ENCODE measurements at regions of chr2 and their contacts with region 1.

Region 1: GRCh38 chr2:208025037-208025813 is at the start of gene PLEKHM3:
- DNase-seq: peak; percentile 83
- ATAC-seq: peak; percentile 92
- H3K4me3 ChIP-seq: peak within 1 kb of the TSS; percentile 71 to 95 (median 92)
- H3K4me3 Mint-ChIP-seq: peak within 1 kb of the TSS; percentile 95
- H3K27ac ChIP-seq: peak within 1 kb of the TSS; percentile 57 to 84
- H3K27ac Mint-ChIP-seq: peak within 1 kb of the TSS; percentile 96
- H3K4me1 ChIP-seq: peaks cover 7 to 8% of the 10 kb centered on the region in 2 donors
- H3K4me1 Mint-ChIP-seq: peaks cover 25% of the 10 kb centered on the region
- H3K27me3 ChIP-seq: no peaks in the 10 kb centered on the region
- H3K27me3 Mint-ChIP-seq: no peaks in the 10 kb centered on the region
- CTCF ChIP-seq: no peak
- total RNA-seq, gene PLEKHM3: 17.7 and 19.5 TPM in 2 replicates

Region 2: DNA sequence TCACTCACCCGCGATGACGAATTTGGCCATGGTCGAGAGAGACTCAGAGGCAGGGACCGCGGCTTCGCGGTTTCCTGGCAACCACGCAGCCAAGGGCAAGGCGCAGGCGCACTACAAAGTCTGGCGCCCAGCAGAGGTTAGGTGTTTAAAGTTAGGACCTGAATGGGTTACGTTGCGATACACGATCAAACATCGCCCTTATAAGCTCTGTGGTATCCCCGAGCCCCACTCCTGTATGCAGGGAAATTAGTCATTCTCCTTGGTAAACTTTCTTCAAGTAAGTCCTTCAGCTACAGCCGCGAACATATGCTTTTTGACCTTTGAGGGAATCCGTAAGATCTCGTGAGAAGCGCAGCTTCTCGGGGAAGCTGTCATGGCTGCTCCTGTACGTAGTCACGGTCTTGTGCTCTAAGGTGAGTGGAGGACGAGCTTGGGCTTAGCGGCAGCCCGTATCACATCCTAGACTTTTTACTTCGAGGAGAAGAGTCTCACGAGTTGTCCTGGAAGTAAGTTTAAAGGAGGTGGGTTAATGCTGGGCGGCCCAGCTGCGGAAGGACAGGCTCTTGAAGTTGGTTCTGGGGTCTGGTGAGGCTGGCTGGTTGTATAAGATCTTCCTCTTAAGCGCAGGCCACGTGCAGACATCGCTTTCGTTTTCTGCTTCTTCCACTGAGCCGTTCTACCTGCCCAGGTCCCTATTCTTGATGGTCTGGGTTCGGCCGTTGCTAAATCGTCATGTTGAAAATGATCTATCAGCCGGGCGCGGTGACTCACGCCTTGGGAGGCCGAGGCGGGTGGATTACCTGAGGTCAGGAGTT is 1259.8 kb before region 1 on chr2 and contains the starts of genes FASTKD2 and MDH1B:
- CTCF ChIA-PET with region 1: no interaction called
- POLR2A ChIA-PET with region 1: no interaction called
- intact Hi-C with region 1: loop called (anchors 2 kb)
- DNase-seq: peak; percentile 96
- ATAC-seq: peak; percentile 85
- H3K4me3 ChIP-seq: peak within 1 kb of the TSS; percentile 63 to 96 (median 87)
- H3K4me3 Mint-ChIP-seq: peak within 1 kb of the TSS; percentile 99
- H3K27ac ChIP-seq: peak within 1 kb of the TSS; percentile 77 to 92
- H3K27ac Mint-ChIP-seq: peak within 1 kb of the TSS; percentile 97
- H3K4me1 ChIP-seq: peaks cover 14% of the 10 kb centered on the region in 2 donors
- H3K4me1 Mint-ChIP-seq: peaks cover 32% of the 10 kb centered on the region
- H3K27me3 ChIP-seq: peaks cover 0 to 17% (median 6%) of the 10 kb centered on the region in 4 experiments
- H3K27me3 Mint-ChIP-seq: no peaks in the 10 kb centered on the region
- CTCF ChIP-seq: no peak
- total RNA-seq, gene FASTKD2: 20.6 and 24.5 TPM in 2 replicates
- total RNA-seq, gene MDH1B: 0.34 TPM in 1 of 2 replicates, not detected in the other

Region 3: GRCh38 chr2:207317378-207317984 is 707.7 kb before region 1 on chr2:
- CTCF ChIA-PET with region 1: no interaction called
- POLR2A ChIA-PET with region 1: no interaction called
- intact Hi-C with region 1: no loop called
- DNase-seq: no peak
- ATAC-seq: no peak
- H3K4me3 ChIP-seq: no peak overlapping the region
- H3K4me3 Mint-ChIP-seq: no peak overlapping the region
- H3K27ac ChIP-seq: no peak overlapping the region
- H3K27ac Mint-ChIP-seq: no peak overlapping the region
- H3K4me1 ChIP-seq: peaks cover 0 to 2% of the 10 kb centered on the region in 2 donors
- H3K4me1 Mint-ChIP-seq: peaks cover 7% of the 10 kb centered on the region
- H3K27me3 ChIP-seq: no peaks in the 10 kb centered on the region
- H3K27me3 Mint-ChIP-seq: peaks cover 4% of the 10 kb centered on the region
- CTCF ChIP-seq: no peak

Region 4: GRCh38 chr2:207769597-207770486 is 255.4 kb before region 1 on chr2 and contains the start of gene FZD5:
- CTCF ChIA-PET with region 1: no interaction called
- POLR2A ChIA-PET with region 1: interaction called, 7 read pairs
- intact Hi-C with region 1: loop called (anchors 2 kb)
- DNase-seq: peak; percentile 89
- ATAC-seq: peak; percentile 88
- H3K4me3 ChIP-seq: peak within 1 kb of the TSS; percentile 55 to 87 (median 65)
- H3K4me3 Mint-ChIP-seq: peak within 1 kb of the TSS; percentile 89
- H3K27ac ChIP-seq: no peak within 1 kb of the TSS
- H3K27ac Mint-ChIP-seq: peak within 1 kb of the TSS; percentile 80
- H3K4me1 ChIP-seq: peaks cover 32 to 44% of the 10 kb centered on the region in 2 donors
- H3K4me1 Mint-ChIP-seq: peaks cover 36% of the 10 kb centered on the region
- H3K27me3 ChIP-seq: peaks cover 0 to 15% (median 4%) of the 10 kb centered on the region in 4 experiments
- H3K27me3 Mint-ChIP-seq: peaks cover 6% of the 10 kb centered on the region
- CTCF ChIP-seq: peak; percentile 33
- total RNA-seq, gene FZD5: 1.8 and 2.5 TPM in 2 replicates

Region 5: GRCh38 chr2:207974216-207974605 is 51.0 kb before region 1 on chr2:
- CTCF ChIA-PET with region 1: interaction called, 3 read pairs
- POLR2A ChIA-PET with region 1: interaction called, 13 read pairs
- intact Hi-C with region 1: no loop called
- DNase-seq: no peak
- ATAC-seq: no peak
- H3K4me3 ChIP-seq: no peak overlapping the region
- H3K4me3 Mint-ChIP-seq: no peak overlapping the region
- H3K27ac ChIP-seq: no peak overlapping the region
- H3K27ac Mint-ChIP-seq: no peak overlapping the region
- H3K4me1 ChIP-seq: peaks cover 14 to 15% of the 10 kb centered on the region in 2 donors
- H3K4me1 Mint-ChIP-seq: peaks cover 15% of the 10 kb centered on the region
- H3K27me3 ChIP-seq: no peaks in the 10 kb centered on the region
- H3K27me3 Mint-ChIP-seq: no peaks in the 10 kb centered on the region
- CTCF ChIP-seq: no peak

Region 6: DNA sequence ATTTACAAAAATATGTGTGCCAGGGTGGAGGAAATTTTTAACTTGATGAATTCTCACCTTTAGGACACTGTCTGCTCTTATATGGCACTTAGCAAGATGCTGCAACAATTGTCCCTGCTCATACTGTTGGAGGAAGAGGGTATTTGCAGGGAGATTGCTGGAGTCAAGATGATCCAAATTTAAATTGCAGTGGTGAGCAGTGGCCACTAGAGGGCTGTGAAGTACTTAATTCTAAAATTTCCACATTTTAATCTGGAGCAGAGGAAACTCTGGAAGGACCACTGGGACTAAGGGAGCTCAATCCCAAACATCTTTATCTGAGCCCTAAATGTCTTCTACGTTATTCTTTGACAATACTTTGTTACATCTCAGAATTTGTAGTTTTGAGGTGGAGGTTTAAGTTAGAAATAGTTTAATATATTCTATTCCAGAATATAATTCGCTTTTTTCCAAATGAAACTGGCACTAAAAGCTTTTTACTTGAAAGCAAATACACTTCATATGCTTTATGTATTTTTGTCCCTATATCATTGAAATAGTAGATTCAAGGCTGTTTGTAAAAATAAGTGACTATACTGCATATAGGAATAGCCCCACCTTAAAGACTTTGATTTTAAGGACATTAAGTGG is 348.4 kb after region 1 on chr2:
- CTCF ChIA-PET with region 1: no interaction called
- POLR2A ChIA-PET with region 1: no interaction called
- intact Hi-C with region 1: no loop called
- DNase-seq: peak; percentile 53
- ATAC-seq: peak; percentile 41
- H3K4me3 ChIP-seq: no peak overlapping the region
- H3K4me3 Mint-ChIP-seq: no peak overlapping the region
- H3K27ac ChIP-seq: no peak overlapping the region
- H3K27ac Mint-ChIP-seq: no peak overlapping the region
- H3K4me1 ChIP-seq: no peaks in the 10 kb centered on the region
- H3K4me1 Mint-ChIP-seq: no peaks in the 10 kb centered on the region
- H3K27me3 ChIP-seq: no peaks in the 10 kb centered on the region
- H3K27me3 Mint-ChIP-seq: peaks cover 11% of the 10 kb centered on the region
- CTCF ChIP-seq: peak; percentile 97